T-cell (primary cell): ENCODE measurements at regions of chr5 and their contacts with region 1.

Region 1: GRCh38 chr5:172827841-172828240 is 6.2 kb upstream of the ERGIC1 start:
- DNase-seq: no peak
- ATAC-seq: no peak
- H3K4me3 ChIP-seq: no peak overlapping the region
- H3K4me3 Mint-ChIP-seq: no peak overlapping the region
- H3K27ac ChIP-seq: no peak overlapping the region
- H3K27ac Mint-ChIP-seq: no peak overlapping the region
- H3K4me1 ChIP-seq: no peaks in the 10 kb centered on the region
- H3K4me1 Mint-ChIP-seq: peaks cover 0 to 1% (median 0%) of the 10 kb centered on the region in 3 donors
- H3K27me3 ChIP-seq: no peaks in the 10 kb centered on the region
- H3K27me3 Mint-ChIP-seq: no peaks in the 10 kb centered on the region

Region 2: GRCh38 chr5:172569861-172570558 is 257.8 kb before region 1 on chr5:
- CTCF ChIA-PET with region 1: no interaction called
- POLR2A ChIA-PET with region 1: no interaction called
- DNase-seq: no peak
- ATAC-seq: no peak
- H3K4me3 ChIP-seq: no peak overlapping the region
- H3K4me3 Mint-ChIP-seq: no peak overlapping the region
- H3K27ac ChIP-seq: no peak overlapping the region
- H3K27ac Mint-ChIP-seq: no peak overlapping the region
- H3K4me1 ChIP-seq: no peaks in the 10 kb centered on the region
- H3K4me1 Mint-ChIP-seq: no peaks in the 10 kb centered on the region
- H3K27me3 ChIP-seq: peaks cover 0 to 35% of the 10 kb centered on the region in 2 experiments
- H3K27me3 Mint-ChIP-seq: peaks cover 10 to 23% of the 10 kb centered on the region in 2 donors

Region 3: DNA sequence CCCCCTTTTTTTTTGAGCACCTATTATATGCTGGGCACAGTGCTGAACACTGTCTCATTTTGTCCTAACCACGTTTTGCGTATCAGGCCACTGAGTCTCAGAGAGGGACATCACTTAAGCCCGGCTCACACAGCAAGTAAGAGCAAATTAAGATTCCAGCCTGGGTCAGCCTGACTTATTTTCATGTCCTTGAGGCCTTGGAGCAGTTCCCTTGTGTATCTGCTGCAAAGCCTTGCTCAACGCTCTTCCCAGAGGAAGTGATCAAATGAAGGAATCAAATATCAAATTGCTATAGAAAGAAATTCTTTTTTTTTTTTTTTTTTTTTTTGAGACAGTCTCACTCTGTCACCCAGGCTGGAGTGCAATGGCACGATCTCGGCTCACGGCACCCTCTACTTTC is 36.9 kb after region 1 on chr5:
- CTCF ChIA-PET with region 1: no interaction called
- POLR2A ChIA-PET with region 1: interaction called in 1 of 2 experiments, 13 read pairs
- DNase-seq: no peak
- ATAC-seq: no peak
- H3K4me3 ChIP-seq: no peak overlapping the region
- H3K4me3 Mint-ChIP-seq: no peak overlapping the region
- H3K27ac ChIP-seq: no peak overlapping the region
- H3K27ac Mint-ChIP-seq: no peak overlapping the region
- H3K4me1 ChIP-seq: peaks cover 3 to 19% of the 10 kb centered on the region in 2 experiments
- H3K4me1 Mint-ChIP-seq: peaks cover 53 to 55% (median 54%) of the 10 kb centered on the region in 3 donors
- H3K27me3 ChIP-seq: no peaks in the 10 kb centered on the region
- H3K27me3 Mint-ChIP-seq: no peaks in the 10 kb centered on the region

Region 4: GRCh38 chr5:172958331-172959046 is 130.6 kb after region 1 on chr5:
- CTCF ChIA-PET with region 1: no interaction called
- POLR2A ChIA-PET with region 1: interaction called in 1 of 2 experiments, 10 read pairs
- DNase-seq: peak in 34 of 35 experiments; percentile 8 to 75 (median 41)
- ATAC-seq: peak; percentile 69 to 77 (median 74)
- H3K4me3 ChIP-seq: peak overlapping the region; percentile 96 to 98
- H3K4me3 Mint-ChIP-seq: peak overlapping the region; percentile 92 to 98 (median 95)
- H3K27ac ChIP-seq: peak overlapping the region; percentile 83
- H3K27ac Mint-ChIP-seq: peak overlapping the region; percentile 95 to 97
- H3K4me1 ChIP-seq: peaks cover 6 to 19% of the 10 kb centered on the region in 2 experiments
- H3K4me1 Mint-ChIP-seq: peaks cover 30 to 36% (median 30%) of the 10 kb centered on the region in 3 donors
- H3K27me3 ChIP-seq: no peaks in the 10 kb centered on the region
- H3K27me3 Mint-ChIP-seq: no peaks in the 10 kb centered on the region

Region 5: GRCh38 chr5:173010547-173011464 is 183.0 kb after region 1 on chr5:
- CTCF ChIA-PET with region 1: no interaction called
- POLR2A ChIA-PET with region 1: no interaction called
- DNase-seq: no peak
- ATAC-seq: no peak
- H3K4me3 ChIP-seq: no peak overlapping the region
- H3K4me3 Mint-ChIP-seq: no peak overlapping the region
- H3K27ac ChIP-seq: no peak overlapping the region
- H3K27ac Mint-ChIP-seq: peak overlapping the region; percentile 3 to 25
- H3K4me1 ChIP-seq: peaks cover 0 to 13% of the 10 kb centered on the region in 2 experiments
- H3K4me1 Mint-ChIP-seq: peaks cover 56 to 72% (median 70%) of the 10 kb centered on the region in 3 donors
- H3K27me3 ChIP-seq: no peaks in the 10 kb centered on the region
- H3K27me3 Mint-ChIP-seq: no peaks in the 10 kb centered on the region